ENCODE measurements at regions of chr16 and their contacts with region 1.

Region 1: GRCh38 chr16:81403616-81404373 is 40.8 kb upstream of the CMIP start:
- DNase-seq: peak; percentile 62 to 89 (median 79)
- ATAC-seq: peak; percentile 86
- H3K4me3 ChIP-seq: peak overlapping the region; percentile 45
- H3K4me3 Mint-ChIP-seq: no peak overlapping the region
- H3K27ac ChIP-seq: no peak overlapping the region
- H3K27ac Mint-ChIP-seq: no peak overlapping the region
- H3K4me1 ChIP-seq: peaks cover 9% of the 10 kb centered on the region
- H3K4me1 Mint-ChIP-seq: no peaks in the 10 kb centered on the region
- H3K27me3 ChIP-seq: no peaks in the 10 kb centered on the region
- H3K27me3 Mint-ChIP-seq: no peaks in the 10 kb centered on the region
- CTCF ChIP-seq: peak; percentile 97

Region 2: GRCh38 chr16:81366316-81366932 is 37.4 kb before region 1 on chr16:
- CTCF ChIA-PET with region 1: no interaction called
- POLR2A ChIA-PET with region 1: no interaction called
- intact Hi-C with region 1: no loop called
- DNase-seq: peak in 4 of 14 experiments; percentile 8 to 73 (median 66)
- ATAC-seq: peak; percentile 81
- H3K4me3 ChIP-seq: no peak overlapping the region
- H3K4me3 Mint-ChIP-seq: no peak overlapping the region
- H3K27ac ChIP-seq: no peak overlapping the region
- H3K27ac Mint-ChIP-seq: no peak overlapping the region
- H3K4me1 ChIP-seq: no peaks in the 10 kb centered on the region
- H3K4me1 Mint-ChIP-seq: no peaks in the 10 kb centered on the region
- H3K27me3 ChIP-seq: no peaks in the 10 kb centered on the region
- H3K27me3 Mint-ChIP-seq: no peaks in the 10 kb centered on the region
- CTCF ChIP-seq: peak; percentile 72

Region 3: DNA sequence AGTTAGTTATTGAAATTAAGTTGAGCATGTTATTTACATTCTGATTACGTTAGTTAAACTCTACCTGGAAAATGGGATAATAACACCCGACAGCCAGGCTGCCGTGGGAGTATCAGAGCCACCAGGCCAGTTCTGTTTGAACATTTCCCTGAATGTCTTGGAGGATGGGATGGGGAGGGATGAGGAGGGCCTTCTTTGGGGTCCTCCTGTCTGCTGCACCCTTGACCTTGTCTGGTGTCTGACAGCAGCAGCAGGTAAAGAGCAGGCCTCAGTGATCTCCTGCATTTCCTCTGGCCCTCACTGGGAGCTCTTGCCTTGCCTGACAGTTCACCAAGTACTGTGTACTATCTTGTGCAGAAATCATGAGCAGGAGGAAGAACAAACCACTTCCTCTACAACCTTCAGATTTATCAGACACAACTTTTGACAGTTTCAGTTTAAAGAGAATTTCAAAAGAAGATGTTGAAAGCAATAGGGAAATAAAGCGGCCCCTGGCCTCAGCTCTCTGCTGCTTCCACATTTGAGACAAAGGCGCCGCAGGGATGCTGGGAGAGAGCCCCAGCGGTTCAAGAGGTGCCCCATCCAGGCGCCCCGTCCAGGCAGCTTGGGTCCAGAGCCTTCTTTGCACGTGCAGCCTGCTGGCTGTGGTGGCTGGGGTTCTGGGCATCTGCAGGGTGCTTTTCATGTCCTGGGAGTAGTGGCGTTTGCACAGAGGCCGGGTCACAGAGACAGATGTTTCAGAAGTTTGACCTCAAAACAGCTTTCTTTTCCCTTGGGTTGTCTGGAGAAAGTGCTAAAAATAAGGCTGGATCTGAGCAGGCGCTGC is 66.1 kb after region 1 on chr16:
- CTCF ChIA-PET with region 1: no interaction called
- POLR2A ChIA-PET with region 1: no interaction called
- intact Hi-C with region 1: loop called in 1 of 2 experiments (anchors 10 kb)
- DNase-seq: peak in 13 of 14 experiments; percentile 14 to 85 (median 33)
- ATAC-seq: peak; percentile 95
- H3K4me3 ChIP-seq: peak overlapping the region; percentile 33
- H3K4me3 Mint-ChIP-seq: peak overlapping the region; percentile 70
- H3K27ac ChIP-seq: peak overlapping the region; percentile 49 to 81
- H3K27ac Mint-ChIP-seq: peak overlapping the region; percentile 86
- H3K4me1 ChIP-seq: peaks cover 87% of the 10 kb centered on the region
- H3K4me1 Mint-ChIP-seq: peaks cover 81% of the 10 kb centered on the region
- H3K27me3 ChIP-seq: no peaks in the 10 kb centered on the region
- H3K27me3 Mint-ChIP-seq: no peaks in the 10 kb centered on the region
- CTCF ChIP-seq: no peak

Region 4: GRCh38 chr16:81616321-81617055 is 212.7 kb after region 1 on chr16:
- CTCF ChIA-PET with region 1: interaction called, 5 read pairs
- POLR2A ChIA-PET with region 1: no interaction called
- intact Hi-C with region 1: loop called in 1 of 2 experiments (anchors 10 kb)
- DNase-seq: peak; percentile 59 to 90 (median 74)
- ATAC-seq: peak; percentile 94
- H3K4me3 ChIP-seq: peak overlapping the region; percentile 32
- H3K4me3 Mint-ChIP-seq: peak overlapping the region; percentile 72
- H3K27ac ChIP-seq: peak overlapping the region; percentile 70 to 87
- H3K27ac Mint-ChIP-seq: no peak overlapping the region
- H3K4me1 ChIP-seq: peaks cover 28% of the 10 kb centered on the region
- H3K4me1 Mint-ChIP-seq: no peaks in the 10 kb centered on the region
- H3K27me3 ChIP-seq: no peaks in the 10 kb centered on the region
- H3K27me3 Mint-ChIP-seq: no peaks in the 10 kb centered on the region
- CTCF ChIP-seq: no peak

Region 5: GRCh38 chr16:81623363-81624102 is 219.7 kb after region 1 on chr16:
- CTCF ChIA-PET with region 1: interaction called, 5 read pairs
- POLR2A ChIA-PET with region 1: no interaction called
- intact Hi-C with region 1: loop called (anchors 2 to 10 kb)
- DNase-seq: peak; percentile 32 to 77 (median 58)
- ATAC-seq: peak; percentile 59
- H3K4me3 ChIP-seq: no peak overlapping the region
- H3K4me3 Mint-ChIP-seq: no peak overlapping the region
- H3K27ac ChIP-seq: no peak overlapping the region
- H3K27ac Mint-ChIP-seq: peak overlapping the region; percentile 43
- H3K4me1 ChIP-seq: peaks cover 12% of the 10 kb centered on the region
- H3K4me1 Mint-ChIP-seq: peaks cover 13% of the 10 kb centered on the region
- H3K27me3 ChIP-seq: no peaks in the 10 kb centered on the region
- H3K27me3 Mint-ChIP-seq: no peaks in the 10 kb centered on the region
- CTCF ChIP-seq: peak; percentile 73

Region 6: DNA sequence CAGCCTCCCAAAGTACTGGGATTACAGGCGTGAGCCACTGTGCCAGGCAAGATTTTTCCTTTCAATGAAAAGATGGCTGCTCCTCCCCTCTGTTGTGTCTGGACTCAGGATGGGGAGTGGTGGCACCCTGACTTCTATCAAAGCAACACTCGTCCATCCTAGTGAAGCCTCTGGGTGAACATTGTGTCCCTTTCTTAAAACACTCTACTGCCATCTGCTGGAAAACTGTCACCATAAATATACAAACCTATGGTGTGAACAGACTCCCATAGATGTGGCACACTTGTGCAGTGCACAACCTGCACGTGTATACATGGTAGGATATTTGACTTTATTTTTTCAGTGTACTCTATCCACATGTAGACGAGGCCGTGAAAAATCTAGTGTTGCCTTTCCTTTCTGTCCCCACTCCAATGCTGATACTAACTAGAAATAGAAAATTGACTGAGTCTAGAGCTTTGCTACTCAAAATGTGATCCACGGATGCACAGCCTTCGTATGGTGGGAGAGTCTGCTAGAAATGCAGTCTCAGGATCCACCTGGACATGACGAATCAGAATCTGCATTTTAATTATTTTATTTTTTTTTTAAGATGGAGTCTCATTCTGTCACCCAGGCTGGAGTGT is 319.4 kb after region 1 on chr16:
- CTCF ChIA-PET with region 1: interaction called, 10 read pairs
- POLR2A ChIA-PET with region 1: no interaction called
- intact Hi-C with region 1: loop called (anchors 1 kb)
- DNase-seq: peak in 10 of 14 experiments; percentile 11 to 86 (median 26)
- ATAC-seq: peak; percentile 67
- H3K4me3 ChIP-seq: no peak overlapping the region
- H3K4me3 Mint-ChIP-seq: no peak overlapping the region
- H3K27ac ChIP-seq: no peak overlapping the region
- H3K27ac Mint-ChIP-seq: peak overlapping the region; percentile 11
- H3K4me1 ChIP-seq: peaks cover 13% of the 10 kb centered on the region
- H3K4me1 Mint-ChIP-seq: peaks cover 15% of the 10 kb centered on the region
- H3K27me3 ChIP-seq: no peaks in the 10 kb centered on the region
- H3K27me3 Mint-ChIP-seq: no peaks in the 10 kb centered on the region
- CTCF ChIP-seq: peak; percentile 85

Region 7: GRCh38 chr16:81737885-81738786 is 334.3 kb after region 1 on chr16:
- CTCF ChIA-PET with region 1: no interaction called
- POLR2A ChIA-PET with region 1: no interaction called
- intact Hi-C with region 1: loop called in 1 of 2 experiments (anchors 5 kb)
- DNase-seq: peak; percentile 78 to 93 (median 85)
- ATAC-seq: peak; percentile 98
- H3K4me3 ChIP-seq: peak overlapping the region; percentile 29
- H3K4me3 Mint-ChIP-seq: peak overlapping the region; percentile 72
- H3K27ac ChIP-seq: no peak overlapping the region
- H3K27ac Mint-ChIP-seq: peak overlapping the region; percentile 47
- H3K4me1 ChIP-seq: peaks cover 24% of the 10 kb centered on the region
- H3K4me1 Mint-ChIP-seq: peaks cover 8% of the 10 kb centered on the region
- H3K27me3 ChIP-seq: no peaks in the 10 kb centered on the region
- H3K27me3 Mint-ChIP-seq: no peaks in the 10 kb centered on the region
- CTCF ChIP-seq: peak; percentile 91

Region 8: GRCh38 chr16:81786321-81786720 is 382.5 kb after region 1 on chr16:
- CTCF ChIA-PET with region 1: no interaction called
- POLR2A ChIA-PET with region 1: no interaction called
- intact Hi-C with region 1: no loop called
- DNase-seq: no peak
- ATAC-seq: no peak
- H3K4me3 ChIP-seq: no peak overlapping the region
- H3K4me3 Mint-ChIP-seq: no peak overlapping the region
- H3K27ac ChIP-seq: no peak overlapping the region
- H3K27ac Mint-ChIP-seq: no peak overlapping the region
- H3K4me1 ChIP-seq: no peaks in the 10 kb centered on the region
- H3K4me1 Mint-ChIP-seq: no peaks in the 10 kb centered on the region
- H3K27me3 ChIP-seq: peaks cover 0 to 2% of the 10 kb centered on the region in 2 experiments
- H3K27me3 Mint-ChIP-seq: peaks cover 18% of the 10 kb centered on the region
- CTCF ChIP-seq: no peak

Measured in CD4-positive, alpha-beta T cell (primary cell).